Ovary (tissue), 10 donors: ENCODE measurements at regions of chr12 and their contacts with region 1.

Region 1: GRCh38 chr12:1576410-1577241 is 17.8 kb downstream of the FBXL14 start:
- DNase-seq: peak; percentile 62 to 86 (median 75)
- H3K4me3 ChIP-seq: peak overlapping the region; percentile 20
- H3K27ac ChIP-seq: peak overlapping the region; percentile 41 to 65
- H3K4me1 ChIP-seq: peaks cover 14% of the 10 kb centered on the region
- H3K27me3 ChIP-seq: no peaks in the 10 kb centered on the region
- CTCF ChIP-seq: no peak
- EP300 ChIP-seq: no peak
- POLR2A ChIP-seq: no peak

Region 2: GRCh38 chr12:1533602-1534304 is 42.9 kb before region 1 on chr12:
- intact Hi-C with region 1: loop called in 2 of 4 experiments (anchors 5 kb)
- DNase-seq: no peak
- H3K4me3 ChIP-seq: no peak overlapping the region
- H3K27ac ChIP-seq: peak overlapping the region in 1 of 2 donors; percentile 46
- H3K4me1 ChIP-seq: peaks cover 2% of the 10 kb centered on the region
- H3K27me3 ChIP-seq: no peaks in the 10 kb centered on the region
- CTCF ChIP-seq: no peak
- EP300 ChIP-seq: no peak
- POLR2A ChIP-seq: no peak